Sigmoid colon (tissue), 7 donors: ENCODE measurements at regions of chr1 and their contacts with region 1.

Region 1: GRCh38 chr1:240027059-240027462 is 64.6 kb upstream of the FMN2 start:
- DNase-seq: no peak
- H3K4me3 ChIP-seq: no peak overlapping the region
- H3K27ac ChIP-seq: no peak overlapping the region
- H3K4me1 ChIP-seq: peaks cover 0 to 6% (median 0%) of the 10 kb centered on the region in 4 donors
- H3K27me3 ChIP-seq: no peaks in the 10 kb centered on the region
- CTCF ChIP-seq: peak; percentile 59 to 85 (median 78)
- EP300 ChIP-seq: no peak
- POLR2A ChIP-seq: no peak

Region 2: DNA sequence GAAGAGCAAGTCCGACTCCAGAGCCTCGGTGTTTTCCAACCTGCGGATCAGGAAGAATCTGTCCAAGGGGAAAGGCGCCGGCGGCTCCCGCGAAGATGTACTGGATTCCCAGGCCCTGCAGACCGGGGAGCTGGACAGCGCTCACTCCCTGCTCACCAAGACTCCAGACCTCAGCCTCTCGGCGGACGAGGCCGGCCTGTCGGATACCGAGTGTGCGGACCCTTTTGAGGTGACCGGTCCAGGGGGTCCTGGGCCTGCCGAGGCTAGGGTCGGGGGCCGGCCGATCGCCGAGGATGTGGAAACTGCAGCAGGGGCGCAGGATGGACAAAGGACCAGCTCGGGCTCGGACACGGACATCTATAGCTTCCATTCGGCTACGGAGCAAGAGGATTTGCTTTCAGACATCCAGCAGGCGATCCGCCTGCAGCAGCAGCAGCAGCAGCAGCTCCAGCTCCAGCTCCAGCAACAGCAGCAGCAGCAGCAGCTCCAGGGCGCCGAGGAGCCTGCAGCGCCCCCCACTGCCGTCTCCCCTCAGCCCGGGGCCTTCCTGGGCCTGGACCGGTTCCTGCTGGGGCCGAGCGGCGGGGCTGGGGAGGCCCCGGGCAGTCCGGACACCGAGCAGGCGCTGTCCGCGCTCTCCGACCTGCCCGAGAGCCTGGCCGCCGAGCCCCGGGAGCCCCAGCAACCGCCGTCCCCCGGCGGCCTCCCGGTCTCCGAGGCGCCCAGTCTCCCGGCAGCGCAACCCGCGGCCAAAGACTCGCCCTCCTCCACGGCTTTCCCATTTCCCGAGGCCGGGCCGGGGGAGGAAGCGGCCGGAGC is 65.4 kb after region 1 on chr1:
- intact Hi-C with region 1: loop called (anchors 5 kb)
- DNase-seq: peak; percentile 66
- H3K4me3 ChIP-seq: peak overlapping the region; percentile 54 to 77 (median 72)
- H3K27ac ChIP-seq: peak overlapping the region in 3 of 4 donors; percentile 82 to 92 (median 85)
- H3K4me1 ChIP-seq: peaks cover 0 to 33% (median 22%) of the 10 kb centered on the region in 4 donors
- H3K27me3 ChIP-seq: peaks cover 0 to 16% (median 0%) of the 10 kb centered on the region in 3 donors
- CTCF ChIP-seq: peak in 1 of 4 experiments; percentile 12
- EP300 ChIP-seq: no peak
- POLR2A ChIP-seq: no peak

Region 3: DNA sequence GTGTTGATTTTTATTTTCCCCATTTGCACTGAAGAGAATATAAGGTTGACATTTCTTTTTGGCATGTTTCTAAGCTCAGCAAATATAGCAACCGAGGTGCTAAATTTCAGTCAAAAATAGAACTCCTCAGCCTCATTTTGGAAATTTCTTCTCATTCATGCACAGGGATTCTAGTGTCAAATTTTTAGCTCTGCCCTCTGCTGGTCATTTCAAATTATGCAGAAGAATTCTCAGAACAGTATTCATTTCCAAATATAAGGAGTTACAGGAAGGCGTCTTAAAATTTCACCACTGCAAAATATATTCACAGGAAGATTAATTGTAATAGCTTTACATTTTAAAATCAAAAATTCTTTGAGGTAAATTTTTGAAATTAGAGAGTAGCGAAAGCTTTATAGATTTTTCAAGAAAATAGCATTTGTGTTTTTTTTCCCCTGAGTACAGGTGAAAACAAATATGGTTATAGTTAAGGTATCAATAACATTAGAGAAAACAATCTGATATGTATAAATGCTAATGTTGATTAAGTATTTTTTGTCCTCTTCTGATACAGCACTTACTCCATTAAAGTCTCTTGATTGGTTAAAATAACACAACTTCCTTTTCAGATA is 122.5 kb after region 1 on chr1:
- intact Hi-C with region 1: loop called (anchors 1 kb)
- DNase-seq: no peak
- H3K4me3 ChIP-seq: no peak overlapping the region
- H3K27ac ChIP-seq: no peak overlapping the region
- H3K4me1 ChIP-seq: no peaks in the 10 kb centered on the region
- H3K27me3 ChIP-seq: no peaks in the 10 kb centered on the region
- CTCF ChIP-seq: peak in 3 of 4 experiments; percentile 56 to 68 (median 57)
- EP300 ChIP-seq: no peak
- POLR2A ChIP-seq: no peak

Region 4: DNA sequence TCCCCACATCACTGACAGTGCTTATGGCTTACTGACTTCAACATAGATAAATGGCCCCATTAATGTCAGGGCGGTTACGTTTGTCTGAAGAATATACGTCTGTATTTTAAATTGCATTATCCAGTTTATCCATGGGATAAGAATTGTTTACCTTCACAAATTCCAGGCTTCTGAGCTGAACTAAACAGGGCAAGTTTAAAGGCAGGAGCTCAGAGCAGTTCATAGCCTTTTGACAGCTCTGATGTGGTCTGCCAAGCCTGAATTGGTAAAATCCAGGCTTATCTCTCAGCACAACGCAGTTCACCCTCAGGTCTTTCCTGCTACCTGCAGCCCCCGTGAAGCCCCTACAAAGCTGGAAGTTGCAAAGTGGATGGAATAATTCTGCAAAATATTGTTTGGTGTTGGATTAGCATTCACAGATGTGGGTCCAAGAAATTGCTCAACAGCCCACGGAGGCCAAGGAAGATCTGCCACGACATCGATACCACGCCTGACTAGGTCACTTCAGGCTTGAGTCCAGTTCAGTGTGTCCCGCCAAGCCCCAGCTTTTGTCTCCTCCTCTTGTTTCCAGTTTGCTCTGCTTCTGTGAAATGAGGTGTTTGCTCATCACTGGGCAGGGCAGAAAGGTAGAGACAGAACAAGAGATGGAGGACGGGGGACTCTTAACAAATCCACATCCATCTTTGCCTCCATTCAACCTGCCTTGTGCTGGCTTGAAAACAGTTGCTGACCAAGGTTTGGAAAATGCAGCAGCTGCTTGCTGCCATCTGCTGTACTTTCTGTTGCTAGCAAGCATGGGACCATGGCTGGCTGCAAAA is 664.7 kb after region 1 on chr1:
- intact Hi-C with region 1: loop called (anchors 2 kb)
- DNase-seq: peak; percentile 69
- H3K4me3 ChIP-seq: peak overlapping the region in 2 of 4 donors; percentile 12 to 15
- H3K27ac ChIP-seq: peak overlapping the region; percentile 14 to 72 (median 67)
- H3K4me1 ChIP-seq: peaks cover 0 to 36% (median 33%) of the 10 kb centered on the region in 4 donors
- H3K27me3 ChIP-seq: no peaks in the 10 kb centered on the region
- CTCF ChIP-seq: peak; percentile 69 to 88 (median 74)
- EP300 ChIP-seq: no peak
- POLR2A ChIP-seq: no peak